ENCODE measurements at regions of chr17 and their contacts with region 1.

Region 1: GRCh38 chr17:66939461-66940114 is 24.9 kb upstream of the CACNG4 start:
- DNase-seq: no peak
- H3K4me3 ChIP-seq: no peak overlapping the region
- CTCF ChIP-seq: no peak
- POLR2A ChIP-seq: no peak

Region 2: GRCh38 chr17:66850692-66851091 is 88.9 kb before region 1 on chr17:
- intact Hi-C with region 1: loop called (anchors 5 kb)
- DNase-seq: peak in 1 of 2 donors; percentile 8
- H3K4me3 ChIP-seq: no peak overlapping the region
- CTCF ChIP-seq: no peak
- POLR2A ChIP-seq: no peak